Dorsolateral prefrontal cortex (tissue), 120 donors: ENCODE measurements at regions of chr3 and their contacts with region 1.

Region 1: GRCh38 chr3:128584412-128585020 is 66.1 kb downstream of the RPN1 start:
- DNase-seq: peak; percentile 63 to 82 (median 79)
- H3K4me3 ChIP-seq: peak overlapping the region in 1 of 59 donors; percentile 12
- H3K27ac ChIP-seq: peak overlapping the region in 1 of 59 donors; percentile 16
- H3K27me3 ChIP-seq: no peaks in the 10 kb centered on the region
- CTCF ChIP-seq: peak; percentile 37 to 95 (median 81)

Region 2: GRCh38 chr3:128095222-128095703 is 489.3 kb before region 1 on chr3:
- intact Hi-C with region 1: loop called (anchors 5 to 10 kb)
- DNase-seq: peak; percentile 78 to 89 (median 87)
- H3K4me3 ChIP-seq: no peak overlapping the region
- H3K27ac ChIP-seq: peak overlapping the region in 29 of 59 donors; percentile 2 to 72 (median 43)
- H3K27me3 ChIP-seq: no peaks in the 10 kb centered on the region
- CTCF ChIP-seq: peak; percentile 60 to 93 (median 86)

Region 3: GRCh38 chr3:128426128-128426921 is 158.2 kb before region 1 on chr3:
- intact Hi-C with region 1: loop called (anchors 2 to 5 kb)
- DNase-seq: peak in 4 of 10 donors; percentile 22 to 73 (median 40)
- H3K4me3 ChIP-seq: peak overlapping the region in 55 of 59 donors; percentile 5 to 63 (median 41)
- H3K27ac ChIP-seq: peak overlapping the region in 1 of 59 donors; percentile 2
- H3K27me3 ChIP-seq: peaks cover 0 to 21% (median 3%) of the 10 kb centered on the region in 45 donors
- CTCF ChIP-seq: peak; percentile 21 to 96 (median 76)